ENCODE measurements at regions of chr1 and their contacts with region 1.

Region 1: GRCh38 chr1:47192458-47193384 is 2.9 kb upstream of the PDZK1IP1 start:
- DNase-seq: peak in 8 of 10 donors; percentile 53 to 76 (median 60)
- H3K4me3 ChIP-seq: no peak overlapping the region
- H3K27ac ChIP-seq: no peak overlapping the region
- H3K27me3 ChIP-seq: peaks cover 0 to 17% (median 0%) of the 10 kb centered on the region in 45 donors
- CTCF ChIP-seq: peak; percentile 76 to 97 (median 92)

Region 2: DNA sequence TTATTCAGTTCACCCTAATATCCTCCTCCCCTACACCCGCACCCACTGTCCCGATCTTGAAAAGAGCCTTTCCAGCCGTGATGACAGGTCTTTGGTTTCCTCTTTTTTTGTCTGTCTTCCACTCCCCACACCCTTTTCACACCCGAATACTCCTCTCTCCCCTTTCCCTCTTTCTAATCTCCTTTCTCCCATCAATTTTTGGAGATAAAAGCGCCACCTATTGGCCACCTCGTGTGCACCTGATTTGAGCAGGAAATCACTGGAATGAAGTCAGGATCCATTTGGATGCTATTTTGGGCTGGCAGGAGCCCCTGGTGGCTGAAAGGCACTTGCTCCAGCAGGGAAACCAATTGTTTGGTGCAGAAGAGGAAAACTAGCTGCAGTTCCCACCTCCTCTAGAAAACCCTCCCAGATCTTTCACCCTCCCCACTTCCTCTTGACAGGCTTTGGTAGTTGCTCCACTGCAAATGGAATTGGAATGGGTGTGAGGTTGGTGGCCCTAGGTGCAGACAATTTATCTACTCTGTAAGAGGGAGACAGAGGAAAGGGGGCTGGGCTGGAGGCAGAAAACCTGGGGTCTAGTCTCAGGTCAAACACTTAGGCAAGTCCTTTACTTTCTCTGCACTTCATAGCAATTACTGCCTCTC is 231.7 kb after region 1 on chr1:
- intact Hi-C with region 1: loop called in 1 of 2 experiments (anchors 5 kb)
- DNase-seq: no peak
- H3K4me3 ChIP-seq: no peak overlapping the region
- H3K27ac ChIP-seq: no peak overlapping the region
- H3K27me3 ChIP-seq: peaks cover 0 to 56% (median 22%) of the 10 kb centered on the region in 45 donors
- CTCF ChIP-seq: peak; percentile 37 to 75 (median 62)

Region 3: DNA sequence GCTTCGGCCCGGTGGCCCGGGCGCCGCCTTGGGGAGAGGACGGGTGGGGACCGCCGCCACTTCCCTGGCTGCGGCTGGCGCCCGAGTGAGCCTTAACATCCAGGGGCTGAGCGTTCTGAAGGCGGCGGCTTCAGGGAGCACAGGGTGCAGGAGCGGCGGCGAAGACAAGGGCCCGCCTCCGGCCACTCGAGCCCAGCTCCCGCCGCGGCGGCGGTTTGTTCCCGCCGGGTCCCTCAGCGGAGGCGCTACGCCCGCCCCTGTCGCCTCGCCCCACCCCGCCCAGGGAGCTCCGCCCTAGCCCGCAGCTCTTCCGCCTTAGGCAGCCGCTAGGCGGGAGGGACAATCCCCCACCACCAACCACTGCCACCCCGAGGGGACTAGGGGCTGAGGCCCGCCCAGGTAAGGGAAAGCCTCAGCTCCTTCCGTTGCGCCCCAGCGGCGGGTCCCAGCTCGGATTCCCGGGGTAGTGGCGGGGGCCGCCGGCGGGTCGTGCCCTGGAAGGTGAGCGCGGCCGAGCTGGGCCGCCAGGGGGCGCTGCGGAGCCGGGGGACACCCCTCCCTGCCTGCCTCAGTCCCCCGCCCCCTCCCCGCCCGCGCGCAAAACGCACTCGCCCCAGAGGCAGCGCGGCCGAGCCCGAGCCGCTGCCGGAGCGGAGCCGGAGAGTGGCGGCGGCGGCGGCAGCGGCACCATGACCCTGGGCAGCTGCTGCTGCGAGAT is 244.9 kb after region 1 on chr1 and contains the start of gene FOXD2:
- intact Hi-C with region 1: loop called in 1 of 2 experiments (anchors 10 kb)
- DNase-seq: peak in 5 of 10 donors; percentile 11 to 73 (median 45)
- H3K4me3 ChIP-seq: peak within 1 kb of the TSS; percentile 20 to 71 (median 58)
- H3K27ac ChIP-seq: peak within 1 kb of the TSS in 29 of 59 donors; percentile 16 to 80 (median 49)
- H3K27me3 ChIP-seq: peaks cover 9 to 99% (median 93%) of the 10 kb centered on the region in 45 donors
- CTCF ChIP-seq: peak; percentile 55 to 98 (median 85)
- total RNA-seq, gene FOXD2: 0.09 to 2.0 (median 0.25) TPM in 79 of 120 experiments, not detected in the others